Activated T-helper 2 cell treated with anti-CD3 and anti-CD28 coated beads, Interferon-gamma antibody, Interleukin-2, Interleukin-4, amounts not matched to agents 10 μg/mL and 5 μg/mL and 100 μg/mL, durations not matched to agents 14 hours and 24 hours and 36 hours (primary cell): ENCODE measurements at regions of chr11 and their contacts with region 1.

Region 1: DNA sequence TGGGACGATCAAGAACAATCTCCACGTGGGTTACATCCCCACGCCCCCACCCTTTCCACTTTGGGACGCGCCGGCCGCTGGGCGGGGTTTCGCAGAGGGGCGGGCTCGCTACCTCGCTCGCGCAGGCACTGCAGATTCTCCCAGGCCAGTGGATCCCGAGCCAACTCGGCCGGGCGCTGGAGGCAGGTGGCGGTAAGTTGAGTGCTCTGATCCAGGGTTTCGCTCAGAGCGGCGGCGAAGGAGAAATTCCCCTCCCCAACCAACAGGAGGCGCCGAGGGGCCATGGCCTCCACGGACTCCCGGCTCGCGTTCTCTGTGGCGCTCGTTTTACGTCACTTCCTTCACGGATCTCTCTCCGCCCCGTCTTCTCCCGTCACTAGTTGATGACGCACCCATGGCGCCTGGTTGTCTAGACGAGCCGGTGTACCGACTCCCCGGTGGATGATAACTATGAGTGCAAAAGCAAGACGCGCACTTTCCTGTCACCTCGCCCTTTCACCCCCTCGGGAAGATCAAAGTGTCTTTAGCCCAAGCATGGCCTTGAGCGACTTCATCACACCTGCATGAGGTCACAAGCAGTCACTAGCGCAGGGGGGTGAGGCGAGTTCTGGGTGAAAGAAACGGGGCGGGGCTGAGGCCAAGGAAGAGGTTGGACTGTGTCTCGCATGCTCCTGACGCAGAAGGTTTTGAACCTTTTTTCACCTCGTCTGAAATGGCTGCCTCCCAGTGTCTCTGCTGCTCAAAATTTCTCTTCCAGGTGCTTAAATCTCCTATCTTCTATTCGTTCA is at the starts of genes CFAP68 and FDXACB1:
- DNase-seq: peak; percentile 94
- H3K4me3 Mint-ChIP-seq: peak within 1 kb of the TSS; percentile 96
- H3K27ac Mint-ChIP-seq: peak within 1 kb of the TSS; percentile 100
- H3K4me1 Mint-ChIP-seq: peaks cover 13% of the 10 kb centered on the region
- H3K27me3 Mint-ChIP-seq: no peaks in the 10 kb centered on the region
- total RNA-seq, gene CFAP68: 19.4 and 22.2 TPM in 2 replicates
- total RNA-seq, gene FDXACB1: 7.4 and 8.2 TPM in 2 replicates

Region 2: GRCh38 chr11:111982019-111982464 is 103.0 kb after region 1 on chr11:
- intact Hi-C with region 1: loop called (anchors 1 kb)
- DNase-seq: peak; percentile 15
- H3K4me3 Mint-ChIP-seq: no peak overlapping the region
- H3K27ac Mint-ChIP-seq: no peak overlapping the region
- H3K4me1 Mint-ChIP-seq: peaks cover 6% of the 10 kb centered on the region
- H3K27me3 Mint-ChIP-seq: peaks cover 2% of the 10 kb centered on the region

Region 3: GRCh38 chr11:112024773-112025678 is 146.0 kb after region 1 on chr11 and contains the start of gene DLAT:
- intact Hi-C with region 1: loop called (anchors 2 kb)
- DNase-seq: peak; percentile 86
- H3K4me3 Mint-ChIP-seq: peak within 1 kb of the TSS; percentile 99
- H3K27ac Mint-ChIP-seq: peak within 1 kb of the TSS; percentile 99
- H3K4me1 Mint-ChIP-seq: peaks cover 13% of the 10 kb centered on the region
- H3K27me3 Mint-ChIP-seq: no peaks in the 10 kb centered on the region
- total RNA-seq, gene DLAT: 47.2 and 47.3 TPM in 2 replicates

Region 4: GRCh38 chr11:112174789-112175598 is 296.0 kb after region 1 on chr11 and contains the start of gene BCO2:
- intact Hi-C with region 1: loop called (anchors 5 kb)
- DNase-seq: peak; percentile 38
- H3K4me3 Mint-ChIP-seq: peak within 1 kb of the TSS; percentile 64
- H3K27ac Mint-ChIP-seq: peak within 1 kb of the TSS; percentile 30
- H3K4me1 Mint-ChIP-seq: peaks cover 8% of the 10 kb centered on the region
- H3K27me3 Mint-ChIP-seq: peaks cover 27% of the 10 kb centered on the region
- total RNA-seq, gene BCO2: 1.2 and 1.4 TPM in 2 replicates